Activated CD4-positive, alpha-beta T cell treated with anti-CD3 and anti-CD28 coated beads, Interleukin-2, amount 10 ng/mL, durations not matched to agents 24 days and 14 days (primary cell): ENCODE measurements at regions of chr5 and their contacts with region 1.

Region 1: GRCh38 chr5:111254613-111255012 is 30.4 kb downstream of the CAMK4 start:
- DNase-seq: peak; percentile 90
- H3K4me3 Mint-ChIP-seq: peak overlapping the region; percentile 39
- H3K27ac Mint-ChIP-seq: peak overlapping the region; percentile 91
- H3K4me1 Mint-ChIP-seq: peaks cover 61% of the 10 kb centered on the region
- H3K27me3 Mint-ChIP-seq: no peaks in the 10 kb centered on the region

Region 2: DNA sequence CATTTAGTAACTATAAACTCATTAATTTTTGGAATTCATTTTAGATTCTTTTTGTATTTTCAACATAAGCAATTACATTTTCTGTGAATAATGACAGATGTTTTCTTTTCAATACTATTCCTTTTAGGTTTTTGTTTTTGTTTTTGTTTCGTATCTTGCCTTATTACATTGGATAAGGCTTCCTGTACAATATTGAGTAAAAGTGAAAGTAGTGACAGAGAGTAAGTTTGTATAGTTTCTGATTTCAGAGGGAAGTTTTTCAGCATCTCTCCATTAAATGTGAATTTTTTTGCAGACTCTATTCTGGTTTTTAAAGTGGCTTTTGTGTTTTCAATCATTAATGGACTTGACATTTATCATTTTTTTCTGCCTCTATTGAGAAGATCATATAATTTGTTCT is 43.3 kb before region 1 on chr5:
- intact Hi-C with region 1: loop called (anchors 1 kb)
- DNase-seq: no peak
- H3K4me3 Mint-ChIP-seq: peak overlapping the region; percentile 32
- H3K27ac Mint-ChIP-seq: no peak overlapping the region
- H3K4me1 Mint-ChIP-seq: peaks cover 27% of the 10 kb centered on the region
- H3K27me3 Mint-ChIP-seq: peaks cover 6% of the 10 kb centered on the region

Region 3: GRCh38 chr5:111229871-111230810 is 24.5 kb before region 1 on chr5:
- intact Hi-C with region 1: loop called (anchors 1 kb)
- DNase-seq: peak; percentile 75
- H3K4me3 Mint-ChIP-seq: peak overlapping the region; percentile 86
- H3K27ac Mint-ChIP-seq: peak overlapping the region; percentile 98
- H3K4me1 Mint-ChIP-seq: peaks cover 74% of the 10 kb centered on the region
- H3K27me3 Mint-ChIP-seq: no peaks in the 10 kb centered on the region

Region 4: GRCh38 chr5:111271885-111272284 is 17.3 kb after region 1 on chr5:
- intact Hi-C with region 1: loop called (anchors 2 kb)
- DNase-seq: no peak
- H3K4me3 Mint-ChIP-seq: no peak overlapping the region
- H3K27ac Mint-ChIP-seq: peak overlapping the region; percentile 42
- H3K4me1 Mint-ChIP-seq: peaks cover 20% of the 10 kb centered on the region
- H3K27me3 Mint-ChIP-seq: no peaks in the 10 kb centered on the region

Region 5: DNA sequence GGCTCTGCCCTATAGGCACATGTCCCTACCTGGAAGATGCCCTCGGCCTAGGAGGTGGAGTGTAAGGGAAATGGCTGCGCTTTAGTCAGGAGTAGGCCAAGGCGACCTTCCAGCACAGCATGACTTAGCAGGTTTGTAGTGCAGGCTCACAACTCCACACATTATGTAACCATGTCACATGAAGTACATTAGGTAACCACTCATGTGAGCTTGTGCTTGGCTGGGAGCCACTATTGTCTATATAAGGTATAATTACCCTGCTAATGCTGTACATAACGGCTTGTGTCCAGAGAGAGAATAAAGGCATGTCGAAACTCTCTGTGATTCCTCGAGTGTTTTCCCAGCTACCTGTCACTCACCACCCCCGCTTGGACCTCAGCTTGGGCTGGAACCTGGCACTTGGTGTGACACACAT is 44.5 kb after region 1 on chr5:
- intact Hi-C with region 1: no loop called
- DNase-seq: no peak
- H3K4me3 Mint-ChIP-seq: no peak overlapping the region
- H3K27ac Mint-ChIP-seq: peak overlapping the region; percentile 34
- H3K4me1 Mint-ChIP-seq: peaks cover 6% of the 10 kb centered on the region
- H3K27me3 Mint-ChIP-seq: no peaks in the 10 kb centered on the region

Region 6: GRCh38 chr5:111735583-111736270 is 481.1 kb after region 1 on chr5:
- intact Hi-C with region 1: no loop called
- DNase-seq: no peak
- H3K4me3 Mint-ChIP-seq: no peak overlapping the region
- H3K27ac Mint-ChIP-seq: peak overlapping the region; percentile 48
- H3K4me1 Mint-ChIP-seq: peaks cover 38% of the 10 kb centered on the region
- H3K27me3 Mint-ChIP-seq: no peaks in the 10 kb centered on the region